ENCODE measurements at regions of chr2 and their contacts with region 1.

Region 1: GRCh38 chr2:191051825-191052778 is 38.1 kb upstream of the STAT1 start:
- DNase-seq: peak; percentile 79
- ATAC-seq: peak; percentile 49
- H3K4me3 ChIP-seq: no peak overlapping the region
- H3K27ac ChIP-seq: no peak overlapping the region
- H3K4me1 ChIP-seq: peaks cover 7% of the 10 kb centered on the region
- H3K27me3 ChIP-seq: no peaks in the 10 kb centered on the region
- CTCF ChIP-seq: peak; percentile 83

Region 2: DNA sequence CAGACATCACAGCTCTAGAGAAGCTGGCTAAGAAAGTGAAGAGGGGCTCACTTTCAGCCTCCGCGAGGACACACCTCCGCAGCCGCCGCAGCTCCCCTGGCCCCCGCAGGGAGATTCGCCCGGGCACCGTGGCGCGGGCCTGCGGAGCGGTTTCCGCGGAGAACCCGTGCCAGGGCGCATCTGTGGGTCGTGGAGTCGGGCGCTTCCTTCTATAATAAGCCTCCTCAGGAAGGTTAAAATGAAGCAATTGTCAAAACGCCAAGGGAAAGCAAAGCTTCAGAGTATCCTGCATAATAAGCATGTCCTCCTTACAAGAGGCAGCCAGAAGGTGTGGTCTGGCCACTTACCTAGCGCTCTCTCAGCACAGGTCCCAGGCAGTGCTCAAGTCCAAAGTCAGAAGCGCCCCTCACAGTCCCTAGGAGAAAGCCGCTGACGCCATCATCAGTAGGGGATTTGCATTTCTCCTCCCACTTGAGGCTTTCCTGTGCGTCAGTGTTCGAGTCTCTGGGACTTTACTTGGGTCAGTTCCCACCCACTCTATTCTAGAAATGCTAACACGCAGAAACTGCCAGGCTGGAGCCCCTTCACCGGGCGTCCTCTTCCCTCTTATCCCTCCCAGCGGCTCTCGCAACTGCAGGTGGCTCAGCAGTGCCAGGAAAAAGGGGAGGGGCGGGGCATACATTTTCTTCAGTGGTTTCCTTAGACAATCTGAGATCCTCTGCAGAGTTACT is 98.7 kb after region 1 on chr2 and contains the start of gene STAT4:
- CTCF ChIA-PET with region 1: interaction called, 37 read pairs
- POLR2A ChIA-PET with region 1: interaction called, 4 read pairs
- intact Hi-C with region 1: loop called (anchors 1 kb)
- DNase-seq: peak; percentile 57
- ATAC-seq: peak; percentile 77
- H3K4me3 ChIP-seq: peak within 1 kb of the TSS; percentile 71
- H3K27ac ChIP-seq: no peak within 1 kb of the TSS
- H3K4me1 ChIP-seq: peaks cover 5% of the 10 kb centered on the region; the same call in 1 of the 2 replicates
- H3K27me3 ChIP-seq: no peaks in the 10 kb centered on the region
- CTCF ChIP-seq: no peak
- total RNA-seq, gene STAT4: 1.6 and 2.2 TPM in 2 replicates

Region 3: DNA sequence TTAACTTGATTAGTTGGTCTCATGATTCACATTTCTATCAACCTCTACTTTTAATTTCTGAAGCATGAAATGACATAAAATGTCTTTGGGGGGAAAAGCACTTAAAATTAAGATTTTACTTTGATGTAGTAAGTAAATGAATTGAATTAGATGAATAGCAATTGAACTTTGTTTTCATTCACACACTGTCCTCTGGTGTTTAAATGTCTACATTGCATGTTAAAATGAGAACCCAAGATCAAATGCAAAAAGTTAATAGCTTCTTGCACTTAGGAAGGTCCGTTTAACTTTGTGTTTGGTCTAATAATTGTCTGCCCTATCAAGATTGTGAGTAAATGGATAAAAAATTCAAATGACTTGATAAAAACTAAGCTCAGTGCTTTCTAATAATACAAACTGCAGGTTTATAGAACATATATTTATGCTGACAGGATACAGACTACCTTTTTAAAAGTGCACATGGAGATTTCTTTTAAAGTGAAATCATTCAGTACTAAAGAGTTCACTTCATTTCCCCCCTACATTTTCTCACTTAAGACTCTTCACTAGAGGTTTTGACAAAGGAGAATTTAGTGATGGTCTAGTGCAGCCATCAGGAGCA is 469.6 kb after region 1 on chr2:
- CTCF ChIA-PET with region 1: interaction called, 8 read pairs
- POLR2A ChIA-PET with region 1: no interaction called
- intact Hi-C with region 1: loop called (anchors 1 kb)
- DNase-seq: peak; percentile 65
- ATAC-seq: no peak
- H3K4me3 ChIP-seq: no peak overlapping the region
- H3K27ac ChIP-seq: no peak overlapping the region
- H3K4me1 ChIP-seq: no peaks in the 10 kb centered on the region
- H3K27me3 ChIP-seq: no peaks in the 10 kb centered on the region
- CTCF ChIP-seq: peak; percentile 84

Measured in PC-3 (cell line).